AG04450 (cell line): ENCODE measurements at regions of chrX and their contacts with region 1.

Region 1: DNA sequence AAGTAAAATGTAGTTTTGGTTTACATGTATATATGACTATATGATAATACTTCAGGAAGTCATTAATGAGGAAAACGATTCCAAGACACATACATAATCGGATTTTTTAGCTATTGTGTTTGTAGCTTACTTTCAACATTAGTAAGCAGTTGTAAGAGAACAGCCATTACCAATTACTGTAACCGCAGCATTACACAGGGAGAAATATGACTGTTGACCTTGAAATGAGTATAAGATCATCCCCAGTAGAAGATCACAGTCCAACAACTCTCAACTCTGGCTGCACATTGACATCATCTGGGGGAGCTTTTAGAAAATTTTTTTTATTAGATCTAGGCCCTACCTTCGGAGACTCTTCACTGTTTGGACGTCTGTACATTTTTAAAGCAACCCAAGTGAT is 762.0 kb upstream of the MAGEB2 start:
- DNase-seq: no peak
- H3K4me3 ChIP-seq: no peak overlapping the region
- H3K27ac ChIP-seq: no peak overlapping the region
- H3K27me3 ChIP-seq: no peaks in the 10 kb centered on the region
- CTCF ChIP-seq: no peak

Region 2: GRCh38 chrX:29478336-29479069 is 25.2 kb after region 1 on chrX:
- CTCF ChIA-PET with region 1: interaction called, 12 read pairs
- POLR2A ChIA-PET with region 1: no interaction called
- DNase-seq: no peak
- H3K4me3 ChIP-seq: no peak overlapping the region
- H3K27ac ChIP-seq: no peak overlapping the region
- H3K27me3 ChIP-seq: no peaks in the 10 kb centered on the region
- CTCF ChIP-seq: peak; percentile 40